KBM-7 (cell line): ENCODE measurements at regions of chr4 and their contacts with region 1.

Region 1: DNA sequence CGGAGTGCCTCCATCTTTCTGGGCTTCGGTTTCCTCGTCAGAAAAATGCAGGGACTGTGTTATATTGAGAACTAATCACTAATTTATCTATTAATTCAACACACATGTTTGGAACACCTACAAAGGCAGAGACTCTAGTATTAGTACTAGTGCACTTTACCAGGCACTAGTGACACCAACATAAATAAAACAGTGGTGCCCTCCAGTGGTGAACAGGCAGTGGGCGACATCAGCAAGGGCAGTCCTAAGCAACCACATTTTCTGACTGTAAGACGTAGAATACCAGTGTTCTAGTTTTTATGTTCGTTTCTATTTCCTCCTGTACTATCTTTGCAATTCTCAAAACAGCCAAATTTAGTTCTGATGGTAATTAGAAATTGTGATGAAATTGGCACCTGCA is 69.1 kb upstream of the UCP1 start:
- DNase-seq: peak; percentile 47

Region 2: DNA sequence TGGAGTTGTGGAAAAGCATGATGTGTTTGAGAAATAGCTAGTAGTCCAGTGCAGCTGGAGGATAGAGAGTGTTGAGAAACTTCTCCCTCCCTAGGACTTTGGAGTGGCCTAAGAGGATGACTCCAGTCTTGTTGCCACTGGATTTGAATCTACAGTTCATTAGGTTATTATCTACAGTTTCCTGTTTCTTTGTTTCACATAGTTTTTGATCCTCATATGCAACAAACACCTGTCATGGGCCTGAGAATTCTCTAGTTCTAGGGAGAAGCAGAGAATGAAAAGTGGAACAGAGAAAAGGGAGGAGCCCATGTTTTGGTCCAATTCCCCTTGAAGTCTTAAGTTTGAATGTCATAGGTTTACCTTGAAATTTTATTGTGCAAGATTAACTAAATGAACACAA is 192.0 kb after region 1 on chr4:
- in situ Hi-C with region 1: loop called (anchors 25 kb)
- DNase-seq: no peak

Region 3: GRCh38 chr4:141081921-141082395 is 444.1 kb after region 1 on chr4:
- in situ Hi-C with region 1: no loop called
- DNase-seq: no peak